Caco-2 (cell line): ENCODE measurements at regions of chr12 and their contacts with region 1.

Region 1: GRCh38 chr12:67943226-67943892 is 45.9 kb upstream of the IFNG-AS1 start:
- DNase-seq: peak; percentile 58 to 59
- H3K4me3 ChIP-seq: no peak overlapping the region
- H3K4me3 Mint-ChIP-seq: no peak overlapping the region
- H3K27ac Mint-ChIP-seq: no peak overlapping the region
- H3K4me1 ChIP-seq: peaks cover 15% of the 10 kb centered on the region
- H3K4me1 Mint-ChIP-seq: peaks cover 9% of the 10 kb centered on the region
- H3K27me3 ChIP-seq: no peaks in the 10 kb centered on the region; the same call in 1 of the 2 replicates
- H3K27me3 Mint-ChIP-seq: peaks cover 9% of the 10 kb centered on the region
- CTCF ChIP-seq: peak; percentile 48 to 58

Region 2: DNA sequence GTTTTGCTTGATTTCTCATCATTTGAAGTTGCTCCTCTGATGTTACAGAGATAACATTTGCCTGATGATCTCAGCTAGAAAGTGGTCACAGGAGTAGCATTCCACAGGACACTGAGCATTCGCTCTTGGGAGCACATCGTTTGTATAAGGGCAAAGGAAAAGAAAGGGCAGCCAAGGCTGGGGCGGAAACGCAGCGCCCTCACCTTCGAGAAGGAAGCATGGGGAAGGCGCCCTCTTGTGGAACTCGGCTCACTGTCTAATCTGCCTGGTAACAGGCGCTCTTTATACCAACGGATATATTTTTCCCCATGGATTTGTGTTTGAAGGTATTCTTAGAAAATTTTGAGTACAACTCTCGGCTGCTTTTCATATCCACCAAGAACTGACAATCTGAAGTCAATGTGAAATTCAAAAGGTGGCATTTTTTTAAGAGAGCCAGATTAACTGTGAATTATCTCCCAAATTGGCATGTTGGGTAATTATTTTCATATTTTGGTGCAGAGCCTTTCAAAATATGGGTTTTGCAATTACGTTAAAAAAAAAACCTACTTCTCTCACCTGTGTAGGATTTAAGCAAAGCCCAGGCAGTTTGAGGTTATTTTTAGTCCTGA is 501.5 kb before region 1 on chr12:
- CTCF ChIA-PET with region 1: no interaction called
- POLR2A ChIA-PET with region 1: no interaction called
- intact Hi-C with region 1: loop called (anchors 5 kb)
- DNase-seq: peak; percentile 74 to 77
- H3K4me3 ChIP-seq: no peak overlapping the region
- H3K4me3 Mint-ChIP-seq: no peak overlapping the region
- H3K27ac Mint-ChIP-seq: no peak overlapping the region
- H3K4me1 ChIP-seq: no peaks in the 10 kb centered on the region
- H3K4me1 Mint-ChIP-seq: no peaks in the 10 kb centered on the region
- H3K27me3 ChIP-seq: no peaks in the 10 kb centered on the region
- H3K27me3 Mint-ChIP-seq: no peaks in the 10 kb centered on the region
- CTCF ChIP-seq: peak; percentile 62 to 80

Region 3: GRCh38 chr12:67648521-67649260 is 294.7 kb before region 1 on chr12 and contains the start of gene DYRK2:
- CTCF ChIA-PET with region 1: no interaction called
- POLR2A ChIA-PET with region 1: no interaction called
- intact Hi-C with region 1: loop called (anchors 2 kb)
- DNase-seq: peak; percentile 74 to 82
- H3K4me3 ChIP-seq: peak within 1 kb of the TSS; percentile 75
- H3K4me3 Mint-ChIP-seq: peak within 1 kb of the TSS; percentile 79
- H3K27ac Mint-ChIP-seq: peak within 1 kb of the TSS; percentile 93
- H3K4me1 ChIP-seq: peaks cover 24% of the 10 kb centered on the region; the same call in 1 of the 2 replicates
- H3K4me1 Mint-ChIP-seq: peaks cover 14% of the 10 kb centered on the region
- H3K27me3 ChIP-seq: no peaks in the 10 kb centered on the region
- H3K27me3 Mint-ChIP-seq: no peaks in the 10 kb centered on the region
- CTCF ChIP-seq: peak in 1 of 2 experiments; percentile 8
- total RNA-seq, gene DYRK2: 24.4 and 24.6 TPM in 2 replicates

Region 4: GRCh38 chr12:67710582-67710981 is 232.8 kb before region 1 on chr12:
- CTCF ChIA-PET with region 1: interaction called, 3 read pairs
- POLR2A ChIA-PET with region 1: no interaction called
- intact Hi-C with region 1: loop called (anchors 5 kb)
- DNase-seq: peak; percentile 79 to 86
- H3K4me3 ChIP-seq: no peak overlapping the region
- H3K4me3 Mint-ChIP-seq: peak overlapping the region; percentile 59
- H3K27ac Mint-ChIP-seq: peak overlapping the region; percentile 90
- H3K4me1 ChIP-seq: peaks cover 44% of the 10 kb centered on the region
- H3K4me1 Mint-ChIP-seq: peaks cover 37% of the 10 kb centered on the region
- H3K27me3 ChIP-seq: no peaks in the 10 kb centered on the region
- H3K27me3 Mint-ChIP-seq: no peaks in the 10 kb centered on the region
- CTCF ChIP-seq: no peak

Region 5: DNA sequence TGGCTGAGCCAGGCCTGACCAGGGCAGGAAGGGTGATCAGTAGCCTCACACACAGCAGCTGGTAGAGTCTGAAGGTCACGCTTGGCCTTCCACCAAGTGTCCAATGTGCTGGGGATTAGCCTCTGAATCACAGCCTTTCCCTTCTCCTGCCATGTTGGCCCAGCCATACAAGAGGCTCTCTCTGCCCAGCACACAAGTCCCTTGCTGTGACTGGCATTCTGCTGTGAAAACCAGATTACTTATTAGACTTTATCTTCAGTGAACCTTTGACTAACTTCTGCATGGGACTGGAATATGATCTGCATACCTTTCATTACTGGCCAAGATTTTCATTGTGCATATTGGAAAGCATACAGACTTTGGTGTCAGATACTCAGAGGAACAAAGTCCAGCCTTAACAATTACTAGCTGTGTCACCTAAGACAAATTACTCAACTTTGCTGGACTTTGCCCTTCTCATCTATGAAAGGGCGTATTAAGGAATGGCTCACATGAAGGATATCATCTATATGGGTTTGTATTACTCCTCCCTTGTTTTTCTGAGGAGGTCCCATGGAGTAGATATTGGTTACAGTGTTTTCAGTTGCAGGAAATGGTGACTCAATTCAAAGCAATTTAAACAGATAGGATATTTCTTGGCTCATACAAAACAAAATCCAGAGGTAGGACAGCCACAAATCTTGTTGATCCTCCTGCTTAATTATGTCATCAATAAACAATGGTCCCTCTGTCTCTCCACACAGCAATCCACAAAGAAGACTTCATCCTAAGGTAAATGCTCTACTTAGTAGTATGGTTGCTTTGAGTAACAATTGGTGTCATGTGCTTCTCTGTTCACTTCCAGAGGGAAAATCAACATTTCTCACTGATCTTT is 195.3 kb before region 1 on chr12:
- CTCF ChIA-PET with region 1: no interaction called
- POLR2A ChIA-PET with region 1: no interaction called
- intact Hi-C with region 1: loop called (anchors 10 kb)
- DNase-seq: peak; percentile 54 to 78
- H3K4me3 ChIP-seq: no peak overlapping the region
- H3K4me3 Mint-ChIP-seq: peak overlapping the region; percentile 59
- H3K27ac Mint-ChIP-seq: peak overlapping the region; percentile 94
- H3K4me1 ChIP-seq: peaks cover 39% of the 10 kb centered on the region
- H3K4me1 Mint-ChIP-seq: peaks cover 30% of the 10 kb centered on the region
- H3K27me3 ChIP-seq: no peaks in the 10 kb centered on the region
- H3K27me3 Mint-ChIP-seq: no peaks in the 10 kb centered on the region
- CTCF ChIP-seq: peak in 1 of 2 experiments; percentile 16

Region 6: DNA sequence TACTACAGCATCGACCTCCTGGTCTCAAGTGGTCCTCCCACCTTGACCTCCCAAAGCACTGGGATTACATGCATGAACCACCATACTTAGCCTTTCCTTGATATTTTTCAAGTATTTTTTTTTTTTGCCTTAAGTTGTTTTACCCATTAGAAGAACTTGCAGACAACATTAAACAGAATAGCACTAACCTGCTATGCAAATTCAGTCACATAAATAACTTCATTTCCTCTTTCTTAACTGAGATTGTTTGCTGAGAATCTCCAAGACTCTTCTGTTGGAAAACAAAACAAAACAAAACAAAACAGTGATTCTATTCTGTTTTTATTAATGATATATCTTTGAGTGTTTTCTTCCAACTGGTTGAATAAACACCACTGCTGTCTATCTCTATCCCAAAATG is 70.0 kb before region 1 on chr12:
- CTCF ChIA-PET with region 1: no interaction called
- POLR2A ChIA-PET with region 1: no interaction called
- intact Hi-C with region 1: loop called (anchors 5 kb)
- DNase-seq: no peak
- H3K4me3 ChIP-seq: no peak overlapping the region
- H3K4me3 Mint-ChIP-seq: no peak overlapping the region
- H3K27ac Mint-ChIP-seq: no peak overlapping the region
- H3K4me1 ChIP-seq: no peaks in the 10 kb centered on the region
- H3K4me1 Mint-ChIP-seq: no peaks in the 10 kb centered on the region
- H3K27me3 ChIP-seq: no peaks in the 10 kb centered on the region
- H3K27me3 Mint-ChIP-seq: peaks cover 3% of the 10 kb centered on the region
- CTCF ChIP-seq: no peak